Posterior vena cava (tissue), 2 donors: ENCODE measurements at regions of chr15 and their contacts with region 1.

Region 1: DNA sequence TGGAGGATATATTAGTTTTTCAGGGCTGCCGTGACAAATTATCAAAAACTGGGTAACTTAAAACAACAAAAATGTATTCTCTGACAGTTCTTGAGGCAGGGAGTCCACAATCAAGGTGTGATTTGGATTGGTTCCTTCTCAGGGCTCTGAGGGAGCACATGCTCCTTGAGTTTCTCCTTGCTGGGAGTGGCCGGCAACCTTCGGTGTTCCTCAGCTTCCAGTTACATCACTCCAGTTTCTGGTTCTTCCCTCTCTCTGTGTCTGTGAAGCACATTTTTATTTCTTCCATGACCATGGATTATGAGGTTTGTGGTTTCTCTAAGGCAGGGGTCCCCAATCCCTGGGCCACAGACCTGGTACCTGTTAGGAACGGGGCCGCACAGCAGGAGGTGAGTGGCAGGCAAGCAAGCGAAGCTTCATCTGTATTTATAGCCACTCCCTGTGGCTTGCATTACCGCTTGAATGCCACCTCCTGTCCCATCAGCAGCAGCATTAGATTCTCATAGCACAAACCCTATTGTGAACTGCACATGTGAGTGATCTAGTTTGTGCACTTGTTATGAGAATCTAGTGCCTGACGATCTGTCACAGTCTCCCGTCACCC is 24.3 kb downstream of the LRRC28 start:
- DNase-seq: no peak

Region 2: GRCh38 chr15:99029341-99030144 is 246.1 kb before region 1 on chr15:
- intact Hi-C with region 1: no loop called
- DNase-seq: no peak

Region 3: GRCh38 chr15:99514306-99514705 is 238.7 kb after region 1 on chr15:
- intact Hi-C with region 1: no loop called
- DNase-seq: no peak

Region 4: DNA sequence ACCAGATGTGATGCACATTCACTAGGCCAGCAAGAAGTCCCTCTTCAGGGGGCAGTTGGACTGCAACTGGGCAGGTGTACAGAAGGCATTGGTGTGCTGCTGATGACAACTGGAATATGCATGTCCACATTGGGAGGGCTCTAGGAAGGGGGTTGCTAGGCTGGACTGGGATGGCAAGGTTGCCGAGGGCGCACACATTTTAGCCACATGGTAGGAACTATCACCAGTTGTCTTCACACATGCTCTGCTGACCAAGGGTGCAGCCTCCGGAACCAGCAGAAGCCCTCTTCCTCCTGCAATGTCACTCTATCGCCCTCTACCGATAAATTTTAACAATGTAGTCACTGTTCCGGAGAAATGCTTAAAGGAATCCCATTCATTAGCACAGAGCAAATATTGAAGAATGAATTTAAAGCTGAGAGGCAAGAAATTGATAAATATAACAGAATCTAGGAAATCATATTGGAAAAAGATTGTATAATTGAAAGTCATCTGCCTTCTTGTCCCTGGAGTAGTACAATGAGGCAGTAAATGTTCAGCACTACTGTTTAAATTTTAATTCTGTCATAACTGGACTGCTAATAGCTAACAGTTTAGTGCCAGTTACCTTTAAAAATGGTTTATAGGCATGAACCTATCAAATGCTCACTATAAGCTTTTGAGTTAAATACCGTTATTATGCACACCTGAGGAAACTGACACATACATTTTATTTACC is 480.2 kb after region 1 on chr15:
- intact Hi-C with region 1: loop called in 1 of 2 experiments (anchors 10 kb)
- DNase-seq: no peak